ENCODE measurements at regions of chr1 and their contacts with region 1.

Region 1: DNA sequence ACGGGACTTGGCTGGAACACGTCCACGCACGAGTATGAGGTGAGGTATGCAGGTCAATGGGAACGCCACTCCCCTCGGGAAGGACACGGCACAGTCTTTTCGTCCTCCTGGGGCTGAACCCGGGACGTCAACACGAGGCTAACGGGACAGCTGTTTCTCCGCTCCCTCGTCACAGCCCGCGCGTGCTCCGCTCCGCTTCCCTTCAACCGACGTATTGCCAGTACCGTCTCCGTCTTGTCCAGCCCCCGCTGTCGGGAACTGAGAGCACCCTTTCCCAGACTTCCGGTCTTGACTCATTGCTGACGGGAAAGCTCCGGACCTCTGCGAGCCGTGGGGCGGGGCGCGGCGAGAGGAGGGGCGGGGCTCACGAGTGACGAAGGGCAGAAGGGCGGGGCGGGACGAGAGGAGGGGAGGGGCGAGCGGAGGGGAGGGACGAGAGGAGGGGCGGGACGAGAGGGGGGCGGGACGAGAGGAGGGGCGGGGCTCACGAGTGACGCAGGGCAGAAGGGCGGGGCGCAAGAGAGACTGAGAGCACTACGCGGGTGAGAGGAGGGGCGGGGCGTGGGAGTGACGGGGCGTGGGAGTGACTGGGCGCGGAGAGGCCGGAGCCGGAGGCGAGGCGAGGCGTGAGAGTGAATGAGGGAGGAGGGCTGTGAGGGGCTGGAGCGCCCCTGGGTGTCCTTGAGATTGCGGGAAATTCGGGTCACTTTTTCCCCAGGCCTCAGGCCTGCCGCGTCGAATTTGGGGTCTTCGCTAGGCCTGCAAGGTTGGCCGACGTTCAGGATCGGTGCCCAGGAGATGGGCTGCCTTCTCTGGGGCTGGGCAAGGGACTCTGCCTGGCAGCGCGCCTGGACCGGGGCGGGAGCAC is 22.2 kb upstream of the CFAP126 start:
- DNase-seq: peak; percentile 99

Region 2: DNA sequence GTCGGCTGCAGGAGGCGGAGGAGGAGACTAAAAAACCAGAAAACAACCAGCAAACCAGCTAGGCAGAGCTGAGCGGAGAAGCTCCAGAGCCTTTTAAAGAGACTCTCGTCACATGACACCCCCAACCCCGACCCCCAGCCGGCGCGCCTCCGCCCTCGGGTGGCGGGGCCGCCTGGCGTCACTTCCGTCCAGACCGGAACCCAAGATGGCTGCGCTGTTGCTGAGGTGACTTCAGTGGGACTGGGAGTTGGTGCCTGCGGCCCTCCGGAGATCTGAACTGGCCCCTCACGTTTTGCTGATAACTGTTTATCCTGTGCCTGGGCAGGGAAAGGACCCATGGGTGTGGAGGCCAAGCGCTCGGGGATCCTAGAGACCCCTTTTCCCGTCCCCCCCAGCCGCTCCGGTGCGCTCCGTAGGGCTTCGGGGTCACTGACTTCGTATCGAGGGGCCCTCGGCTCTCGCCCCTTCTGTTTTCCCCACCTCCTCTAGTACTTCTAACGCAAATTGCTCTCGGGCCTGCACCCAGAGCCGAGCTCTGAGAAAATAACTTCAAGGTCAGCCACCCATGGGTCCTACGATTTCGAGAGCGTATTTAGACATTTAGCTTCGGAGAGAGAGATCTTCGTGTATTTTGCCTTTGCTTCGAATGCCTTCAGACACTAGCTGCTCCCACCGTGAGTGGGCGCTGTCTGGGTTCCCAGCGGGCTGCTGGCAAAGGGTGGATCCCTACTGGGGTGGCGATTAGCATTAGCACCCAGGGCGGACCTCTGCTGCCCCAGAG is 75.5 kb before region 1 on chr1 and contains the start of gene SDHC:
- intact Hi-C with region 1: loop called (anchors 5 kb)
- DNase-seq: peak; percentile 95
- total RNA-seq, gene SDHC: 306 TPM